Activated CD4-positive, alpha-beta T cell treated with anti-CD3 and anti-CD28 coated beads for 36 hours (primary cell): ENCODE measurements at regions of chr11 and their contacts with region 1.

Region 1: GRCh38 chr11:133966921-133967598 is 10.3 kb upstream of the IGSF9B start:
- DNase-seq: peak; percentile 88
- ATAC-seq: peak; percentile 90
- H3K4me3 Mint-ChIP-seq: peak overlapping the region; percentile 69
- H3K27ac Mint-ChIP-seq: peak overlapping the region; percentile 87
- H3K4me1 Mint-ChIP-seq: peaks cover 12% of the 10 kb centered on the region
- H3K27me3 Mint-ChIP-seq: peaks cover 10% of the 10 kb centered on the region

Region 2: DNA sequence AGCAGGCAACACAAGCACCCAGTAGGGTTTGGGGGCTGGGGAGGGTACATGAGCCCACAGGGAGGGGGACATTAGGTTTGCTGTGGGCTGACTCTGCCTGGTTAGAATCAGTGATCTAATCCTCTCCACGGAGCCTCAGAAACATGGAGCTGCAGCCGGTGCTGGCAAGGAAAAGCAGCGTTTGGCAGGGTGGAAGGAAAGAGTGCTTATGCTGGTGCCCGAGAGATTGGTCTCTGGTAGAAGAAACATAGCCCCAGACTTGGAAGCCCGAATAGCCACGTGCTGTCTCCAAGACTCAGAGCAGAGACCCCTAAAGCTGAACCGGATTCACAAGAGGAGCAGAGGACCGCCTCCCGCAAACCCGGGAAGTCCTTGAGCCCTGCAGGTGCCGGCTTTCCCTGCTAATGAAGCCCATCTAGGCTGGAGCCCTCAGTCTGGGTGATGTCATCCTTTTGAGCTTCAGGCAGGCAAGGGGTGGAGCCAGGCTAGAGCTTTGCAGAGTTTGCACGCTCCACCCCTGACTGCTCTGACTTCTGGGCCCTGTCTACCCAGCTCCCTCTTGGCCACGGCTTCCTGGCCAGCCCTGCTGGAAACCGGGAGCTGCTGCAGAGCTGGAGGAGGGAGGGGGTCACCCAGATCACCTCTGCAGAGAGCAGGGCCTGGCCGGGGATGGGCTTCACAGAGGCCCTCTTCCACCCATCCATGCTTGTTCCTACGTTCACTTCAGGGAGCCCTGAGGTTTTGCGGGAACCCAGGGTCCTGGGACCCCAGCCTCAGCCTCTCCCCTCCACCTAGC is 66.8 kb after region 1 on chr11:
- CTCF ChIA-PET with region 1: interaction called, 3 read pairs
- POLR2A ChIA-PET with region 1: no interaction called
- intact Hi-C with region 1: loop called in 1 of 2 experiments (anchors 2 kb)
- DNase-seq: peak; percentile 84
- ATAC-seq: peak; percentile 91
- H3K4me3 Mint-ChIP-seq: no peak overlapping the region
- H3K27ac Mint-ChIP-seq: peak overlapping the region; percentile 7
- H3K4me1 Mint-ChIP-seq: peaks cover 54% of the 10 kb centered on the region
- H3K27me3 Mint-ChIP-seq: peaks cover 4% of the 10 kb centered on the region

Region 3: DNA sequence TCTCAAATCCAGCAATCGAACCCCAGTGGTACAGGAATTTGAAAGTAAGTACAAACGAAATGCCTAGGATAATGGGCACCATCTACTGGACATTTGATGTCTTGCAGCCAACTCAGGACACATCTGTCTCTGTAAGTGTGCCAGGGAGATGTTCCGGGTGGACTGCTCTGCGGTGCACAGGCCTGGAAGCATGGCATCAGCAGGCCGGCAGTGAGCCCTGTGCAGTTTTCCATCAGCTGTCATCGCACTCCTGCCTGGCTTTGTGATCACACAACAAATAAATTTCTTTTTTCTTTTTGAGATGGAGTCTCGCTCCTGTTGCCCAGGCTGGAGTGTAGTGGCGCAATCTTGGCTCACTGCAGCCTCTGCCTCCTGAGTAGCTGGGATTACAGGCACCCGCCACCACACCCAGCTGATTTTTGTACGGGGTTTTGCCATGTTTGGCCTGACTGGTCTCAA is 172.8 kb after region 1 on chr11:
- CTCF ChIA-PET with region 1: no interaction called
- POLR2A ChIA-PET with region 1: no interaction called
- intact Hi-C with region 1: loop called in 1 of 2 experiments (anchors 5 kb)
- DNase-seq: peak; percentile 67
- ATAC-seq: peak; percentile 87
- H3K4me3 Mint-ChIP-seq: no peak overlapping the region
- H3K27ac Mint-ChIP-seq: no peak overlapping the region
- H3K4me1 Mint-ChIP-seq: peaks cover 15% of the 10 kb centered on the region
- H3K27me3 Mint-ChIP-seq: no peaks in the 10 kb centered on the region